PC-3 (cell line): ENCODE measurements at regions of chr4 and their contacts with region 1.

Region 1: DNA sequence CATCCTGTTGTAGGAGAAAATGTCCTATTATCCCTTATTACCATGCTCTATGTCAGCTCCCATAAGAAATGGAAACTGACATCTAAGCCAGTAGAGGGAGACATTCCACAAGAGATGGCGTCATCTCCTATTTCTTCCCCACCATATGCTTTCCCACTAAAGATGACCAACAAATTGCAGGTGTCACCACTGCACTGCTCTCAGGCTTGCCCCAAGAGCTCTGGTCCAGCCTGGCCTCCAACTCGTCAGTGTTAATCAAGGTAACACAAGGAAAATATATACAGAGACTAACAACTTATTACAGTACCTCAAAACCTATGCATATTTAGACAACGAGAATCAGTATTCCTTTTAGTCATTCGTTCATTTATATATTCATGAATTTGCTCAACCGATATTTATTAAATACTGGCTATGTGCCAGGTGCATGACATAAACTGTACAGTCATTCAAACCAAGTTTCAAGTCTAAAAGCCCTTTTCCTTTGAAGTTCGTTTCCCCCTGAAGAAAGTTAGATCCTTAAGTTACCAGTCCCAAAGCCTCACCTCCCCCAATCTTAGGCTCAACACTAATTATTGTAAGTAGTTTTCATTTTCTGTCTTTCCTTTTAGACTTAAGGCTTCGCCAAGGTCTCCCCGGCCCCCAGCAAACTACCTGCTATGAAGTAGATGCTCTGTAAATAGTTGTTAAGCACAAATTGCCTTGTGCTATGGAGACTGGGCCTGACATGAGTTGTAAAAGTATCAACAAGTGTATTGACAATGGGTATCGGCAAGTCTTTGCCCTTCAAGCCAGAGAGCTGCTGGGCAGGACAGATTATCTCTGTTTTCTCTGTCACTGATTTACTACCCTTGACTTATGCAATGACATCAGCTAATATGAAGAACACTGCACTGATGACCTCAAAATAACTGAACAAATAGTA is 3.1 kb upstream of the FGB start:
- DNase-seq: peak; percentile 78
- ATAC-seq: peak; percentile 81
- H3K4me3 ChIP-seq: no peak overlapping the region
- H3K27ac ChIP-seq: peak overlapping the region; percentile 22; the same call in 1 of the 2 replicates
- H3K4me1 ChIP-seq: peaks cover 44% of the 10 kb centered on the region
- H3K27me3 ChIP-seq: no peaks in the 10 kb centered on the region
- CTCF ChIP-seq: peak; percentile 86

Region 2: DNA sequence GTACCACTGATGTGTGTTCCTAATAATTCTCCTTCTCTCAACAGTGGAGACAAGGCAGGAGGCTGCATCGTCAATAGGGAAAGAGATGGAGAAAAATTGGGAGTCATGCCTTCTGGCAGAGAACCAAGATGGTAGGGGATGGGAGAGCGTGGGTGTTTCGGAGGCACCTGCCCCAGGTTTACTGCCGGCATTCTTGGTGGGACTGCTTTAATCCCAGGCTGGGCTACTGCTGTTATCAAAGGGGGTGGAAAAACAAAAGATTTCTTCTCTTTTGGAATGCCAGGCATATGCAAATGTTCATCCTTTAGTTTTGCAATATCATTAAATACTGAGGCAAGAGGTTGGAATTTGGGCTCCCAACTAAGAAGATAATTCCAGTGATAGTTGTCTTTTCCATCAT is 325.2 kb before region 1 on chr4:
- CTCF ChIA-PET with region 1: no interaction called
- POLR2A ChIA-PET with region 1: no interaction called
- intact Hi-C with region 1: no loop called
- DNase-seq: no peak
- ATAC-seq: no peak
- H3K4me3 ChIP-seq: no peak overlapping the region
- H3K27ac ChIP-seq: no peak overlapping the region
- H3K4me1 ChIP-seq: no peaks in the 10 kb centered on the region
- H3K27me3 ChIP-seq: peaks cover 25% of the 10 kb centered on the region
- CTCF ChIP-seq: no peak

Region 3: GRCh38 chr4:154618708-154619315 is 59.1 kb after region 1 on chr4:
- CTCF ChIA-PET with region 1: interaction called, 44 read pairs
- POLR2A ChIA-PET with region 1: no interaction called
- intact Hi-C with region 1: loop called (anchors 1 kb)
- DNase-seq: peak; percentile 72
- ATAC-seq: peak; percentile 61; the same call in 1 of the 2 replicates
- H3K4me3 ChIP-seq: no peak overlapping the region
- H3K27ac ChIP-seq: no peak overlapping the region
- H3K4me1 ChIP-seq: no peaks in the 10 kb centered on the region
- H3K27me3 ChIP-seq: no peaks in the 10 kb centered on the region
- CTCF ChIP-seq: peak; percentile 82

Region 4: GRCh38 chr4:154626793-154627484 is 67.2 kb after region 1 on chr4:
- CTCF ChIA-PET with region 1: interaction called, 10 read pairs
- POLR2A ChIA-PET with region 1: no interaction called
- intact Hi-C with region 1: loop called (anchors 1 kb)
- DNase-seq: peak; percentile 41
- ATAC-seq: peak; percentile 76
- H3K4me3 ChIP-seq: 0 out of 2 replicates have a peak overlapping the region, but pooled peaks have one; percentile 18
- H3K27ac ChIP-seq: no peak overlapping the region
- H3K4me1 ChIP-seq: peaks cover 6% of the 10 kb centered on the region; the same call in 1 of the 2 replicates
- H3K27me3 ChIP-seq: 0 out of 2 replicates have a peak, but pooled peaks cover 3% of the 10 kb centered on the region
- CTCF ChIP-seq: peak; percentile 59

Region 5: GRCh38 chr4:154642373-154643009 is 82.7 kb after region 1 on chr4:
- CTCF ChIA-PET with region 1: no interaction called
- POLR2A ChIA-PET with region 1: no interaction called
- intact Hi-C with region 1: no loop called
- DNase-seq: peak; percentile 51
- ATAC-seq: 0 out of 2 replicates have a peak, but pooled peaks have one; percentile 27
- H3K4me3 ChIP-seq: no peak overlapping the region
- H3K27ac ChIP-seq: no peak overlapping the region
- H3K4me1 ChIP-seq: peaks cover 21% of the 10 kb centered on the region
- H3K27me3 ChIP-seq: no peaks in the 10 kb centered on the region
- CTCF ChIP-seq: peak; percentile 35